Gastrocnemius medialis (tissue), 4 donors: ENCODE measurements at regions of chr9 and their contacts with region 1.

Region 1: DNA sequence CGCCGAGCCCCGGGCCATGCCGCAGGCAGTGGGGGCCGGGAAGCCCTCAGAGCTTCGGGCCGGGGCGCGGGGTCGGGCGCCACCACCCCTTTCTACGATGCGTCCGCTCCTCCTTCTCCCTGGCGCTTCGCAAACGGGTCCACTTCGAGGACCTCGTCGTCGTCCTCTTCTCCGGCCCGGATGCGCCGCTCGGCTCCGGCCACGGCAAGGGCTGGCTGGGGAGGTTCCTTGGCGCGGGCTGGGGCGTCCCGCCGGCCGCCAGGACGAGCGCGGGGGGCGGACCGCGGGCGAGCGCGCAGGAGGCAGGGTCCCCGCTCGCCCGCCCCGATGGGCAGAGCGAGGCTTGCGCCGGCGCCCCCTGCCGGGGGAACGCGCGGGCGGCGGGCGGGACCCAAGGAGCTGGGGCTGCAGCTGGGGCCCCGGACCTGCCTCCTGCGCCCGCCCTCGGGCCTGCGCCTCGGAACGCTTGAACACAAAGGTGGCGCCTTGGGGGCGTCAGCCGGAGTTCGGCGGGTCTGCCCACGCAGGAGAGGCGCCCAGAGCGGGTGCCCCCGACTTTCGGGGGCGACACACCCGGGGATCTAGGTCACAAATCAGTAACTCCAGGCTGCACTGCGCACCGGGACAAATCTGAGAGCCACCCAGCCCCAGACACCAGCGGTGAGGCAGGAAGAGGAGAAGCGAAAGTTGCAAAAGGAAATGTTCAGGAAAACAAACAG is at the start of gene ROR2:
- DNase-seq: no peak
- ATAC-seq: peak; percentile 49 to 56
- H3K4me3 ChIP-seq: peak within 1 kb of the TSS; percentile 38 to 46 (median 40)
- H3K27ac ChIP-seq: no peak within 1 kb of the TSS
- H3K4me1 ChIP-seq: peaks cover 0 to 7% of the 10 kb centered on the region in 2 donors
- H3K27me3 ChIP-seq: peaks cover 38 to 48% (median 48%) of the 10 kb centered on the region in 3 donors
- CTCF ChIP-seq: peak in 2 of 5 experiments; percentile 44 to 51
- POLR2A ChIP-seq: no peak
- total RNA-seq, gene ROR2: 0.15 to 1.2 (median 0.61) TPM

Region 2: GRCh38 chr9:91775011-91775707 is 174.9 kb before region 1 on chr9:
- in situ Hi-C with region 1: loop called in 1 of 4 experiments (anchors 25 kb)
- intact Hi-C with region 1: loop called (anchors 5 kb)
- DNase-seq: peak; percentile 6 to 35
- ATAC-seq: no peak
- H3K4me3 ChIP-seq: no peak overlapping the region
- H3K27ac ChIP-seq: no peak overlapping the region
- H3K4me1 ChIP-seq: no peaks in the 10 kb centered on the region
- H3K27me3 ChIP-seq: peaks cover 0 to 13% (median 5%) of the 10 kb centered on the region in 3 donors
- CTCF ChIP-seq: peak; percentile 38 to 61 (median 52)
- POLR2A ChIP-seq: no peak